ENCODE measurements at regions of chr15 and their contacts with region 1.

Region 1: DNA sequence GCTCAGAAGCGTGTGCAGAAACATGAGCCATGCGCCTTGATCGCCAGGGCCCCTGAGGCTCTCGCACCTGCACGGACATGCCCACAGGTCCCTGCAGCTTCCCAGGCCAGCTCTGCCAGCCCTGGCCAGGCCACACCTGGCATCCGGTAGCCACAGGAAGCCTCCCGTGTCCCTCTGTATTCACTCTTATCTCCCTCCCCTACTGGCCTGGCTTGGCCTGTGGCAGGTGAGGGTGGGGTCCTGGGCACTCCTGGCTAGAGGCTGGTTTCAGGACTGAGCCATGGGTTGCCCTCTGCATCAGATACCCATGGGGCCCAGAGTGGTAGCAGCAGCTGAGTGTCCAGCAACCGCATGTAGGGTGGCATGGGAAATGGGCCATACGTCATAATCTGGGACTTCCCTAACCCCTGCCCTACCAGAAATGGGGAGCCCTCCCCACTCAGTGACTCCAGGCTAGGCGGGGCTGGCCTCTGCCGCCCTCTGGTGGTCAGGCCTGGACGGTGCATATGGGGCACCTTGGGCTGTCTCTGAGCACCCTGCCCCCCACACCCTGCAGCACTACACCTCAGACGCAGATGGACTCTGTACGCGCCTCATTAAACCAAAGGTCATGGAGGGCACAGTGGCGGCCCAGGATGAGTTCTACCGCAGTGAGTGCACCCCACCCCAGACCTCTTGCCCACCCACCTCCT is 12.6 kb upstream of the LMAN1L start:
- DNase-seq: peak; percentile 94
- H3K4me3 ChIP-seq: peak overlapping the region in 1 of 2 experiments; percentile 43; a peak in 1 of 4 replicates
- H3K27ac ChIP-seq: no peak overlapping the region
- H3K4me1 ChIP-seq: no peaks in the 10 kb centered on the region
- H3K27me3 ChIP-seq: no peaks in the 10 kb centered on the region
- CTCF ChIP-seq: peak; percentile 90
- EP300 ChIP-seq: no peak
- RAD21 ChIP-seq: peak; percentile 74

Region 2: GRCh38 chr15:74787251-74788041 is 12.6 kb before region 1 on chr15:
- CTCF ChIA-PET with region 1: interaction called, 43 read pairs
- POLR2A ChIA-PET with region 1: no interaction called
- DNase-seq: peak; percentile 69
- H3K4me3 ChIP-seq: no peak overlapping the region; a peak in 1 of 4 replicates
- H3K27ac ChIP-seq: 0 out of 4 replicates have a peak overlapping the region, but pooled peaks of 1 of the 2 experiments have one; percentile 17
- H3K4me1 ChIP-seq: peaks cover 21 to 70% of the 10 kb centered on the region in 2 experiments
- H3K27me3 ChIP-seq: no peaks in the 10 kb centered on the region
- CTCF ChIP-seq: peak; percentile 55
- EP300 ChIP-seq: no peak
- RAD21 ChIP-seq: 0 out of 2 replicates have a peak, but pooled peaks have one; percentile 13

Region 3: DNA sequence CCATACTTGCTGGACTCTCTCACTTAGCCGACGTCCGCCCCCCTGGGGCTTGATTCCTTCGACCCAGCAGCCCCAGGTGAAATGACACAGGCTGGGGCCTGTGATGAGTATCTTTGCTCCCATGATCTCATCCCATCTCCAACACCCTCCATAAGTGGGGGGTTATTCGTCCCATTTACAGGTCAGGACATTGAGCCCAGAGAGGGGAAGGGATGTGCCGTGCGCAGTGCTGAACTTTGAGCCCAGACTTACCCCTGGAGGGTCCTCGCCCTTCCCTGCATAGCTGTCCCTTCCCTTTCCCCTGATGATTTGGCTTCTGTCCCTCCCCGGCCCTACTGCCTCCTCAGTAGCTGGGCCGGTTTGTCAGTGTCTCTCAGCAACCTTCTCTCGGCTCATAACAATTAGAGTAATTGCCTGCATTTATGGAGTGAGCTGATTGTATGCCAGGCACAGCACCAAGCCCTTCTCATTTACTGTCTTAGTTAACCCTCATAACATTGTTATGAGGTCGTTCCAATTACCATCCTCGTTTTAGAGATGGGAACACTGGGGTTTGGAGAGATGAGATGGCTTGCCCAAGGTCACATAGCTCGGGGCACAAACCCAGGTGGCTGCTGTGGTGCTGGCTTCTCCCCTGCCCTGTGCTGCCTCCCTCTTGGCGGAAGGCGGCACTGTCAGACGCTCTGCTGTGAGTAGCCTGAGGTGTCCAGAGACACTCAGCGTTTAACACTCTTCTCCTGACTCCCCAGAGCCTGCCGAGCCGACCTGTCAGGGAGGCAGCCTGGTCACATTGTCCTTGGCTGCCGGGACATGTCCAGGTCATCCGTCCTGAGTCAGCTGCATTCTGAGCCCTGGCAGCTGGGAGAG is 17.0 kb after region 1 on chr15:
- CTCF ChIA-PET with region 1: interaction called, 10 read pairs
- POLR2A ChIA-PET with region 1: interaction called, 3 read pairs
- DNase-seq: peak; percentile 69
- H3K4me3 ChIP-seq: no peak overlapping the region
- H3K27ac ChIP-seq: peak overlapping the region in 1 of 2 experiments; percentile 13; a peak in 1 of 4 replicates
- H3K4me1 ChIP-seq: peaks cover 0 to 38% of the 10 kb centered on the region in 2 experiments; a peak in 1 of 4 replicates
- H3K27me3 ChIP-seq: no peaks in the 10 kb centered on the region
- CTCF ChIP-seq: no peak
- EP300 ChIP-seq: no peak
- RAD21 ChIP-seq: 0 out of 2 replicates have a peak, but pooled peaks have one; percentile 12

Region 4: GRCh38 chr15:74826364-74826819 is 26.4 kb after region 1 on chr15 and contains the start of gene CPLX3:
- CTCF ChIA-PET with region 1: interaction called, 12 read pairs
- POLR2A ChIA-PET with region 1: no interaction called
- DNase-seq: peak; percentile 62
- H3K4me3 ChIP-seq: no peak within 1 kb of the TSS
- H3K27ac ChIP-seq: no peak within 1 kb of the TSS
- H3K4me1 ChIP-seq: peaks cover 0 to 20% of the 10 kb centered on the region in 2 experiments; a peak in 1 of 4 replicates
- H3K27me3 ChIP-seq: peaks cover 24% of the 10 kb centered on the region; the same call in 1 of the 2 replicates
- CTCF ChIP-seq: no peak
- EP300 ChIP-seq: no peak
- RAD21 ChIP-seq: no peak
- polyA plus RNA-seq, gene CPLX3: not detected in 2 replicates

Measured in SK-N-SH (cell line).